AG04450 (cell line): ENCODE measurements at regions of chr4 and their contacts with region 1.

Region 1: GRCh38 chr4:87339440-87339839 is 16.8 kb upstream of the HSD17B13 start:
- DNase-seq: no peak
- H3K4me3 ChIP-seq: no peak overlapping the region
- H3K27ac ChIP-seq: no peak overlapping the region
- H3K27me3 ChIP-seq: no peaks in the 10 kb centered on the region
- CTCF ChIP-seq: no peak

Region 2: GRCh38 chr4:87326460-87326859 is 13.0 kb before region 1 on chr4:
- CTCF ChIA-PET with region 1: no interaction called
- POLR2A ChIA-PET with region 1: no interaction called
- DNase-seq: no peak
- H3K4me3 ChIP-seq: no peak overlapping the region
- H3K27ac ChIP-seq: no peak overlapping the region
- H3K27me3 ChIP-seq: peaks cover 2% of the 10 kb centered on the region
- CTCF ChIP-seq: no peak

Region 3: GRCh38 chr4:88196013-88196365 is 856.5 kb after region 1 on chr4:
- CTCF ChIA-PET with region 1: no interaction called
- POLR2A ChIA-PET with region 1: interaction called, 11 read pairs
- DNase-seq: no peak
- H3K4me3 ChIP-seq: no peak overlapping the region
- H3K27ac ChIP-seq: no peak overlapping the region
- H3K27me3 ChIP-seq: no peaks in the 10 kb centered on the region
- CTCF ChIP-seq: no peak